ENCODE measurements at regions of chr2 and their contacts with region 1.

Region 1: GRCh38 chr2:210195101-210195852 is 24.1 kb upstream of the KANSL1L start:
- DNase-seq: no peak
- H3K4me3 ChIP-seq: peak overlapping the region; percentile 10 to 68 (median 46)
- H3K27ac ChIP-seq: no peak overlapping the region
- H3K27me3 ChIP-seq: no peaks in the 10 kb centered on the region
- CTCF ChIP-seq: peak; percentile 71 to 97 (median 86)

Region 2: DNA sequence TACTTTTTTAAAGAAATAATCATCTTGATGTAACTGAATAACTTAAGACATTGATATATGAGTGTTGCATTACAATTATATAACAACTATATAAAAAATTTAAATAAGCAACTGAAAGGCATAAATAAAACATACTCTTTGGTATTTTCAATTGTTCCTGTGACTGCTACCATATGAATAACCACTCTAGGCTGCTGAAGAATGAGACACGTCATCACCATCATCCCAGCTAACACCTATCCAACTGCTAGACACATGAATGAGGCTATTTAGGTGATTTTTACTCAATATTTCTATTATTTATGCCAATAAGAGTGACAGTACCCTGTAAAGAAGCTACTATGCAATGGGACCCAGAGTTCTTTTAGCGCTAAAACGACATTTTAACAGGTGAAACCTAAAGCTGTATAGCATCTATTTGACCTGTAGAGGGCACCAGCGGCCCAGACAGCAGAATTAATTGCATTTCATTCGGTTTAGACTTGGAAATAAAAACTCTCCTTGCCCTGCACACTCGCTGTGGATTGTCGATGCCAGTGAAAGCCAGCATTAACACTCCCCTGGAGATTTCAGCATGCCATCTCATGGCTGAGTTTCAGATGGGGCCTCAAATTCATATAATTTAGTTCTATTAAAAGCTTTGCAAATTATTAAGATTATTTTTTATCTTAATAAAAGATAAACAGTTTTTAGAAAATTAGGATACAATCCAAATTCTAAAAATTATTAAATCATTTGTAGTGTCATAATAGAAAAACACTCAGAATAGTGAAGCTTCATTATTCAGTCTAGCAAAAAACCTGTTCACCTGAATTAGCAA is 860.9 kb before region 1 on chr2:
- intact Hi-C with region 1: loop called in 1 of 2 experiments (anchors 10 kb)
- DNase-seq: peak in 8 of 10 donors; percentile 30 to 69 (median 49)
- H3K4me3 ChIP-seq: peak overlapping the region in 8 of 59 donors; percentile 3 to 33 (median 21)
- H3K27ac ChIP-seq: no peak overlapping the region
- H3K27me3 ChIP-seq: peaks cover 0 to 4% (median 0%) of the 10 kb centered on the region in 45 donors
- CTCF ChIP-seq: peak; percentile 73 to 98 (median 88)

Region 3: GRCh38 chr2:209977386-209978239 is 217.7 kb before region 1 on chr2:
- intact Hi-C with region 1: loop called (anchors 2 to 5 kb)
- DNase-seq: no peak
- H3K4me3 ChIP-seq: peak overlapping the region in 1 of 59 donors; percentile 23
- H3K27ac ChIP-seq: no peak overlapping the region
- H3K27me3 ChIP-seq: no peaks in the 10 kb centered on the region
- CTCF ChIP-seq: peak; percentile 48 to 92 (median 73)

Region 4: GRCh38 chr2:210063306-210063705 is 132.0 kb before region 1 on chr2:
- intact Hi-C with region 1: loop called in 1 of 2 experiments (anchors 10 kb)
- DNase-seq: no peak
- H3K4me3 ChIP-seq: no peak overlapping the region
- H3K27ac ChIP-seq: no peak overlapping the region
- H3K27me3 ChIP-seq: no peaks in the 10 kb centered on the region
- CTCF ChIP-seq: no peak